Right ventricle myocardium inferior (tissue), 1 donor: ENCODE measurements at regions of chr1 and their contacts with region 1.

Region 1: DNA sequence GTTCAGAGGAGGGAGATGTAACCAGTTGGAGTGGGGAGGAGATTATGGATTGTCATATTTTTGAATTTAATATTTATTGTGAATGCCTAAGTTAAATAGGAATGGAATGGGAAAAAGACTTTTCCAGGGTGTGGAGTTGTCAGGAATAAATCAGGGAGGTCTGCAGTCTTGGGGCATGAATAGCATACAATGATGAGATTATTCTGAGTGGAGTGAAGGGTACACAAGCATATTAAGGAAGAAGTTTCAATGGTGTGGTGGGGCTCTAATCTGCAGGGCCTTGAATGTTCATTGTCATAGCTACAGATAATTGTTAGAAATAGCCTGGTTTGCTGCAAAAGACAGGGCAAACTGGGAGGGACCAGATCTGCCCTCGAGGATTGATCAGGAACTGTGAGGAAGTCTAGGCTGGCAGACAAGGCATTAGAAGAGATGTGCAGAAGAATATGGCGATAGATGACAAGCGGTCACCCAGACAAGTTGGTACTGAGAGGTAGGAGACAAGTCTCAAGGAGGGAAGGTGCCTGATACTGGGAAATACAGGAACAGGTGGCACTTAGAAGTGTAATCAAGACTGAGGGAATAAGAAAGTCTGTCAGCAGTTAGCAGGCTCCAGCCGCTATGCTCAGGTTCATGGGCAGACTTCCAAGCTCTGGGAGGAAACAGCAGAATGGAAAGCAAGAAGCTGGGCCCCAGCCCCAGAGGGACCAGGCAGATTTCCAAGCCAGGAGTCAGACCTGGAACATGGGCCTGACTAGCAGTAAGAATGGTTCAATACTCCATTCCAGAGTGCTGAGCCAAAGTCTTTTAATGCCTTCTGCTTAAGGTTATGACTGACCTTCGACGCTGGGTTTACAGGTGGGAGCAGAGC is 20.9 kb upstream of the RGL1 start:
- DNase-seq: no peak
- ATAC-seq: peak; percentile 76

Region 2: DNA sequence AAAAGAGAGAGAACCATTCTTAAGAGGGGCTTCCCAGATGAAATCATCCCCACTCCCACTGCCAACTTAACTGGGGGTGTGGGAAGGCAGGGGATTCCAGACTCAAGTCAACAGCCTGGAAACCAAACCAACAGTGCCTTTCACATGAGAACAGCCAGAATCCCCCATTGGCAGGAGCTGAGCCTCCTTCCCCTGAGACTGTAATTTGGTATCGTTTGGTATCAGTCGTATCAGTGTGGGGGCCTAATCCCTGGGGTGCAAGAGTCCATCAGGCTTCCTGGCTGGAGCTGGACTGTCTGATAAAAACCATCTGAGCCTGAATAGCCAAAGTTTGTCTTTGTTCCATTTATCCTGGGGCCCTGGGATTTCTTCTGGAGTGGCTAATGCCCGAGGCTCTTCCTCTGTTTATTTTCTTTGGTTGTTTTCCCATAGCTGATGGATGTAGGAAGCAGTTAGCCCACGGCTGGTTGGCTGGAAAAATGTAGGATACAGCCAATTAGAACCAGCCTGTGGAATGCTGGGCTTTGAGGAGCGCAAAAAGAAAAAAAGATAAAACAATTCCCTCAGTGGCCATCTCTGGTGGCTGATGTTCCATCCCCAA is 513.4 kb before region 1 on chr1:
- intact Hi-C with region 1: no loop called
- DNase-seq: no peak
- ATAC-seq: peak; percentile 91

Region 3: GRCh38 chr1:183734543-183735036 is 49.4 kb before region 1 on chr1:
- intact Hi-C with region 1: loop called (anchors 5 kb)
- DNase-seq: peak; percentile 64
- ATAC-seq: peak; percentile 89